IMR-90 (cell line): ENCODE measurements at regions of chr1 and their contacts with region 1.

Region 1: DNA sequence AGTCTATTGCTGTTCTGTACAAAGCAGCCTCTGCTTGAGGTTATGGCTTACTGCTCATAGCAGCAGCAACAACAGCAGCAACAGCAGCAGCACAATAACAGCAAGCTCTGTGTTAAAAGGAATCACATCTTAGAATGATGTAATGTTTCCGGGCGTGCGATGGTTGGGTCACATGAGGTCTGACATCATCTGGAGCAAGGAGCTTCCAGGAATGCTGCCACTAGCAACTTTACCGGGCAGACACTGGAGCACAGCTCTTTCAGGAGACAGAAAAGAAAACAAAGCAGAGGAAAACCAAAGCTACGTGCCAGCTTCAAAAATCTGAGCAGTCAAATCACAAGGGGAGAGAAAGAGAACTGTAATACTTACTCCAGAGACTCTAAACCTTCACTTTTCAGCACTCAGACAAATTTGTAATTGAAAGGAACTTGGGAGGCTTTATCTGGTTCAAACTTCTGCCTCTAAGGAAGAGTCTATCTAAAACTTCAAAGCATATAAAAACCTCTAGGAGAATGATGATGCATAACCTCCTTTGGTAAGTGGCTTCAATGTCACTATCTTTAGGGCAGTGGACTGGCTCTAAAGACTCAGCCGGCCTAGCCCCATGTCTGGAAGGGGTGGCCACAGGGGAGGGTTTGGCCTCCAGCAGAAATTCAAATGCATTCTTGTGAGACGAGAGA is 28.3 kb upstream of the RAB3GAP2 start:
- DNase-seq: peak; percentile 91
- ATAC-seq: peak; percentile 91
- H3K4me3 ChIP-seq: no peak overlapping the region
- H3K27ac ChIP-seq: peak overlapping the region; percentile 74; the same call in 1 of the 2 replicates
- H3K4me1 ChIP-seq: 0 out of 2 replicates have a peak, but pooled peaks cover 1% of the 10 kb centered on the region
- H3K27me3 ChIP-seq: peaks cover 4% of the 10 kb centered on the region
- CTCF ChIP-seq: no peak
- POLR2A ChIP-seq: no peak
- RAD21 ChIP-seq: no peak

Region 2: DNA sequence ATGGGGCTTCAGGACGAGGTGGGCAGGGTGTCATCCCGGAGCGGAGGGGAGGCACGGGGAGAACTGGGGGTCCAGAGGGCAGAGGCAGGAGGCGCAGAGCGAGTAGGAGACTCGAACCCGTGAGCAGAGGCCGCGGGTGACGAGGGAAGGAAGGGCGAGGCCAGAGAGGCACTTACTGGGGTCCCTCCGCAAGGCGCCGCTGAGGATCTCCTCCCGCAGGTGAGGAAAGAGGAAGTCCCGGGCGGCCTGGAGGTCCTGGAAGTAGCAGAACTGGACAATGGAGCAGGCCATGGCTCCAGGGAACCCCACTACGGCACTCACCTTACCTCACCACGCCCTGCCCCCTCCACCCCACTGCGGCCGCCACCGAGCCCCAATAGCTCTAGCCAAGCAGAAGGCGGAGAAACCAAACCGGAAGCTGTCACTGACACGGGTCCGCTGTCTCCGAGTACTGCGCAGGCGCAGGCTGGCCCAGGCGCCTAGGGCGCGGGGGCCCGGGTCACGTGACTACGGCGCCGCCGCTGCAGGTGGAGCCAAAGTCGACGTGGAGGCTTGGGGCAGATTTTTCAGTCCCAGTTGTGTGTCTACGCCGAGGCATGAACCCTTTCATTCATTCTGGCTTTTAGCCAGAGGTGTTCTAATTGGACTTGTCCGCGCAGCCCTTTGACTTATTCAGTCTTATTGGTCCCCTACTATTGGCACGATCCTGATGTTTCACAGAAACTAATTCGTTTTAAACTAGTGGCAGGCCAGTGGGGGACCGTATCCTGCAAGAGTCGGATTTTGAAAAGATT is 28.3 kb before region 1 on chr1 and contains the start of gene RAB3GAP2:
- CTCF ChIA-PET with region 1: interaction called, 3 read pairs
- POLR2A ChIA-PET with region 1: no interaction called
- dilution Hi-C with region 1: no loop called
- in situ Hi-C with region 1: no loop called
- intact Hi-C with region 1: loop called (anchors 2 kb)
- DNase-seq: peak; percentile 88
- ATAC-seq: peak; percentile 92
- H3K4me3 ChIP-seq: peak within 1 kb of the TSS; percentile 90
- H3K27ac ChIP-seq: peak within 1 kb of the TSS; percentile 94
- H3K4me1 ChIP-seq: peaks cover 8% of the 10 kb centered on the region
- H3K27me3 ChIP-seq: peaks cover 3% of the 10 kb centered on the region
- CTCF ChIP-seq: no peak
- POLR2A ChIP-seq: peak; percentile 70
- RAD21 ChIP-seq: no peak
- total RNA-seq, gene RAB3GAP2: 37.5 and 37.8 TPM in 2 replicates

Region 3: GRCh38 chr1:220378571-220379302 is 78.2 kb after region 1 on chr1:
- CTCF ChIA-PET with region 1: no interaction called
- POLR2A ChIA-PET with region 1: no interaction called
- dilution Hi-C with region 1: no loop called
- in situ Hi-C with region 1: no loop called
- intact Hi-C with region 1: no loop called
- DNase-seq: no peak
- ATAC-seq: no peak
- H3K4me3 ChIP-seq: no peak overlapping the region
- H3K27ac ChIP-seq: no peak overlapping the region
- H3K4me1 ChIP-seq: no peaks in the 10 kb centered on the region
- H3K27me3 ChIP-seq: no peaks in the 10 kb centered on the region
- CTCF ChIP-seq: no peak
- POLR2A ChIP-seq: no peak
- RAD21 ChIP-seq: no peak

Region 4: DNA sequence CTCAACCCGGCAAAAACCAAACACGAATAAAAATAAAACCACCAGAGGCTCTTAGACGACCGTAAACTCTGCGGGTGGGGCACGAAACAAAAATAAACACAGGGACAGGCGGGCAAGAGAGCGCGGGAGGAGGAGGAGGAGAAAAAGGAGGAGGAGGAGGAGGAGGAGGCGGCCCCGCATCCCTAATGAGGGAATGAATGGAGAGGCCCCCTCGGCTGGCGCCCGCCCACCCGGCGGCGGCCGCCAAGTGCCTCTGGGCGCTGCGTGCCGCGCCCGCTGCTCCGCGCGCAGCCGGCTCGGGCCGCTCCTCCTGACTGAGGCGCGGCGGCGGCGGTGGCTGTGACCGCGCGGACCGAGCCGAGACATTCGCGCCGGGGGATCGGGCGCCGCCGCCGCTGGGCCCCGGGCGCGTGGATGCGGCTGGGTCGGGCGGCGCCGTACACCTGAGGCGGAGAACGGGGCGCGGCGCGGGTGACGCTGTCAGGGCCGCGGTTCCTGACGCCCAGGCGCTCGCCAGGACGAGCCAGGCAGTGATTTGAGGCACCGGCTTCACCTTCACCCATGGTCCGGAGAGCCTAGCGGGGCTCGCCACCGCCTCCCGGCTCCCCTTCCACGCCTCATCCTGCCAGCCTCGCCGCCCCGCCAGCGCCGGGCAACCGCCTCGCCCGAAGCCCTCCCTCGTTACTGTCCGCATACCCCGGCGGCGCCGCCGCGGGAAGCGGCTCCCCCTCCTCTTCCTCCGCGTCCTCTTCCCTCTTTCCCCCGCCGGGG is 227.5 kb after region 1 on chr1 and contains the start of gene MARK1:
- CTCF ChIA-PET with region 1: no interaction called
- POLR2A ChIA-PET with region 1: no interaction called
- dilution Hi-C with region 1: no loop called
- in situ Hi-C with region 1: no loop called
- intact Hi-C with region 1: loop called (anchors 10 kb)
- DNase-seq: no peak
- ATAC-seq: peak; percentile 88
- H3K4me3 ChIP-seq: peak within 1 kb of the TSS; percentile 44
- H3K27ac ChIP-seq: no peak within 1 kb of the TSS
- H3K4me1 ChIP-seq: peaks cover 2% of the 10 kb centered on the region; the same call in 1 of the 2 replicates
- H3K27me3 ChIP-seq: peaks cover 37% of the 10 kb centered on the region
- CTCF ChIP-seq: no peak
- POLR2A ChIP-seq: no peak
- RAD21 ChIP-seq: no peak
- total RNA-seq, gene MARK1: not detected in 2 replicates

Region 5: GRCh38 chr1:220841293-220841692 is 540.7 kb after region 1 on chr1:
- CTCF ChIA-PET with region 1: interaction called, 10 read pairs
- POLR2A ChIA-PET with region 1: no interaction called
- dilution Hi-C with region 1: no loop called
- in situ Hi-C with region 1: no loop called
- intact Hi-C with region 1: no loop called
- DNase-seq: no peak
- ATAC-seq: peak; percentile 37; the same call in 1 of the 2 replicates
- H3K4me3 ChIP-seq: no peak overlapping the region
- H3K27ac ChIP-seq: no peak overlapping the region
- H3K4me1 ChIP-seq: peaks cover 6% of the 10 kb centered on the region; the same call in 1 of the 2 replicates
- H3K27me3 ChIP-seq: peaks cover 3% of the 10 kb centered on the region
- CTCF ChIP-seq: no peak; the same call in 1 of the 2 replicates
- POLR2A ChIP-seq: no peak
- RAD21 ChIP-seq: peak; percentile 15; the same call in 1 of the 2 replicates